ENCODE measurements at regions of chr1 and their contacts with region 1.

Region 1: GRCh38 chr1:84772428-84772943 is 82.2 kb upstream of the SSX2IP start:
- DNase-seq: peak; percentile 72
- CTCF ChIP-seq: peak; percentile 80

Region 2: GRCh38 chr1:84433258-84434080 is 339.0 kb before region 1 on chr1:
- CTCF ChIA-PET with region 1: interaction called, 10 read pairs
- POLR2A ChIA-PET with region 1: no interaction called
- DNase-seq: peak; percentile 49
- CTCF ChIP-seq: peak; percentile 70

Region 3: GRCh38 chr1:84442256-84442655 is 330.2 kb before region 1 on chr1:
- CTCF ChIA-PET with region 1: interaction called, 14 read pairs
- POLR2A ChIA-PET with region 1: no interaction called
- DNase-seq: peak; percentile 65
- CTCF ChIP-seq: peak; percentile 52

Region 4: DNA sequence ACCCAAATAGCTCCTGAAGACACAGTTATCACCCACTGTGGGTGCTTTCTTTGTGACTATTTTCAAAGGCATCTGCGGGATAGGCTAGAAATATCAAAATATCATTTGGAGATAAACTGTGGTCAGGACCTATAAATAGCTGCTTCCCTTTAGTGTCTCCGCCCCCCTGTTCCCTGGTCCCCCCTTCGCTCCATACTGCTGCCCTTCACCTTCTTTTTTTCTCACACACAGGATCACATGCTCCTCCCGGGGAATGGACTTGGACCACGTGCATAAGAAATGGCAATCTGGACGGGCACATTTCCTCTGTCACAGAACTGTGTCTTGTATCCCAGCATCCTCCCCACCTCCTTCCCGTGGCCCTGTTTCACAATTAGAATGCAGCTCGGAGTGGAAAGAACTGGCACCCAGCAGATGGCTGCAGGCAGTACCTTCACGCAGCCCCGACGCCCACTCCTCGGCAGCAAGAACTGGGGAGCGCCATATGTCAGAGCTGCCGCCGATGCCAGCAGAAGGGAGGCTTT is 13.5 kb before region 1 on chr1:
- CTCF ChIA-PET with region 1: interaction called, 55 read pairs
- POLR2A ChIA-PET with region 1: no interaction called
- DNase-seq: no peak
- CTCF ChIP-seq: no peak

Region 5: DNA sequence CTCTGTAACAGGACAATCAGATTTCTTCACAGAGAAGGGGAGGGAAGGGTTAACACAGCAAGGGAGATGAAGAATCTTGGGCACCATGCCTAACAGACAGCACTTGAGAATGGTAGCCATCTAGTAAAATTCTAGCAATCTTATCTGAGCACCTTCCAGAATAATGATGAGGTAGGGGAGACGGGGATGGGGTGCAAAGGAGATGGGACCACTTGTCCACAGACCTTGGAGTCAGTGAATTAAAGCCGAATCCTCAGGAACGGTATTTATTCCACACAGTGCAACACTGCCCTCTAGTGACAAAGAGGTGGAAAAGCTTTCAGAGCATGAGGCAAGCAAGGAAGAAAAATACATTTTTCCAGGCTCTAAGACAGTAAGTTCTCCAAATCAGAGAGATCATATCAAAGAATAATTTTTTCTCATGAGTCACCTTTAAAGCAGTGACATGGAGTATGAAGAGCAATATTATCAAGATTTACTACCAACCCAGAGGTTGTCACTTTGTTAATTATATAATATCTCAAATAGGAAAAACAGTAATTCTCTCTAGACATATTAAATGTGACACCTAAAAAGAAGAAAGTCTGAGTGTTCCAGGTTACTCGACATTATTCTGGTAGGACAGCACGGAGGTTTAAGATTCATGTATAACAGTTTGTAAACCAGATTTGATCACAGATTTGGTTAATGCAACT is 163.8 kb after region 1 on chr1:
- CTCF ChIA-PET with region 1: interaction called, 11 read pairs
- POLR2A ChIA-PET with region 1: no interaction called
- DNase-seq: peak; percentile 35
- CTCF ChIP-seq: peak; percentile 88

Measured in GM10248 (cell line).